Astrocyte of the cerebellum (primary cell): ENCODE measurements at regions of chr9 and their contacts with region 1.

Region 1: DNA sequence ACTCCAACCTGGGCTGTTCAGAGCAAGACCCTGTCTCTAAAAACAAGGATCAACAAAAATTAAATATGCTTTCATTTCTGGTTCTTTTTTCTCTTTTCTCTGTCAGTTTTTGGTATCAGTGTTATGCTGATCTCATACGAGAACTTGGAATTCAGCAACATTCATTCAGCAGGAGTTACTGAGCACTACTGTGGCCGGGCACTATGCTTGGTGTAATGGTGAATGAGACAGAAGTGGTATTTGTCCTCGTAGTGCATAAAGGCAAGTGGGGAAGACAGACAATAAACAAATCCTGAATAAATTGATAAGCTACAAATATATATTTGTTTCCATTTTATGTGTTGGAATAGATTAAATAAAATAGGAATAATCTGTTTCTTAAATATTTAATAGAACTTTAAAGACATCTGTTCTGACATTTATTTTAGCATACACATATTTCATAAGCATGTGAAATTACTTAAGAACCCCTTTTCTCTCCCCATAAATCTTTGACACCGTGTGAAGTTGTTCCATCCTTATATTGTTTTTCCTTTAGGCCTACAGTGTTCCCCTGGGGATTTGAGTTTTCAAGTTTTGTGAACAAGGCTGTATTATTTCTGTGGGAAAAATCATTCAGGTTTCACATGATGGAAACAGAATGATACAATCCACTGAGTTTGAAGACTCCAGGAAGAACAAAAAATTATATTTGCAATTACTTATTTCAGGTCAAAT is 24.6 kb downstream of the UBAP1 start:
- DNase-seq: no peak
- H3K4me3 ChIP-seq: no peak overlapping the region
- CTCF ChIP-seq: no peak

Region 2: GRCh38 chr9:34158362-34158869 is 45.0 kb before region 1 on chr9:
- in situ Hi-C with region 1: no loop called
- DNase-seq: peak; percentile 56
- H3K4me3 ChIP-seq: no peak overlapping the region
- CTCF ChIP-seq: no peak

Region 3: GRCh38 chr9:34289159-34289558 is 85.7 kb after region 1 on chr9:
- in situ Hi-C with region 1: loop called (anchors 5 kb)
- DNase-seq: no peak
- H3K4me3 ChIP-seq: no peak overlapping the region
- CTCF ChIP-seq: no peak